CD14-positive monocyte (primary cell): ENCODE measurements at regions of chr15 and their contacts with region 1.

Region 1: DNA sequence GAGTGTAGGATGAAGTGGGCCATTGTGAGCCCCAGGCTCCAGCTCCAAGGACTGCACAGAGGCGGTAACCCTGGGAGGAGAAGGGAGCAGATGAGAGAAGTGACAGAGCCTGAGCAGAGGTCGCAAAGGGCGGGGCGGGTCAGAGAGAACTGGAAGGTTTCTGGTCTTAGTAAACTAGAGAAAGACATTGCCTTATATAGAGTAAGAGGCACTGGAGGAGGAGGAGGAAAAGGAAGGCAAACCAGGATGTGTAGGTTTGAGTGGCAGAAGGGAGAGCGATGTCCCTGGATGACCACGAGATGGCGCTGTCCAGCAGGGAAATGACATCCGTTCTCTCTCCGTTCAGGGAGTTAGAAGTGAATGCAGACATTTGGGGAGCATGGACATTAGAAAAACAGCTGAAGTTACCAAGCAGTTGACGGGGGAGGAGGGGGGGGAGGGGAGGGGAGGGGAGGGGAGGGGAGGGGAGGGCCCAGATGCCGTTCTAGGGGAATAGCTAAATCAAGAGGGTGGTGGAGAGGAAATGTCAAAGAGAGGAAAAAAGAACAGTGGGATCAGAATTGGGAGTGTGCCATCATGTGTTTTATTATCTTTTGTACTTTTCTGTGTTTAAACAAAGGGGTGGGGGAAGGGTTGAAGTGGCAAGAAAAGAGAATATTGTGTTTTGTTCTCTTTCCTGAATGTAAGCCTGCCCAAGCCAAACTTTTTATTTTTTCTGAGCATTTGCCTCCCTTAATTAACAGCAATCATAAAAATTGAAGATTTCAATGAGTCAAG is 48.8 kb downstream of the STARD5 start:
- DNase-seq: peak; percentile 76 to 82 (median 82)
- H3K4me3 ChIP-seq: no peak overlapping the region
- H3K4me3 Mint-ChIP-seq: no peak overlapping the region
- H3K27ac ChIP-seq: no peak overlapping the region
- H3K27ac Mint-ChIP-seq: peak overlapping the region in 1 of 7 donors; percentile 17
- H3K4me1 ChIP-seq: no peaks in the 10 kb centered on the region
- H3K4me1 Mint-ChIP-seq: peaks cover 6% of the 10 kb centered on the region
- H3K27me3 ChIP-seq: no peaks in the 10 kb centered on the region
- H3K27me3 Mint-ChIP-seq: no peaks in the 10 kb centered on the region
- CTCF ChIP-seq: peak; percentile 71

Region 2: DNA sequence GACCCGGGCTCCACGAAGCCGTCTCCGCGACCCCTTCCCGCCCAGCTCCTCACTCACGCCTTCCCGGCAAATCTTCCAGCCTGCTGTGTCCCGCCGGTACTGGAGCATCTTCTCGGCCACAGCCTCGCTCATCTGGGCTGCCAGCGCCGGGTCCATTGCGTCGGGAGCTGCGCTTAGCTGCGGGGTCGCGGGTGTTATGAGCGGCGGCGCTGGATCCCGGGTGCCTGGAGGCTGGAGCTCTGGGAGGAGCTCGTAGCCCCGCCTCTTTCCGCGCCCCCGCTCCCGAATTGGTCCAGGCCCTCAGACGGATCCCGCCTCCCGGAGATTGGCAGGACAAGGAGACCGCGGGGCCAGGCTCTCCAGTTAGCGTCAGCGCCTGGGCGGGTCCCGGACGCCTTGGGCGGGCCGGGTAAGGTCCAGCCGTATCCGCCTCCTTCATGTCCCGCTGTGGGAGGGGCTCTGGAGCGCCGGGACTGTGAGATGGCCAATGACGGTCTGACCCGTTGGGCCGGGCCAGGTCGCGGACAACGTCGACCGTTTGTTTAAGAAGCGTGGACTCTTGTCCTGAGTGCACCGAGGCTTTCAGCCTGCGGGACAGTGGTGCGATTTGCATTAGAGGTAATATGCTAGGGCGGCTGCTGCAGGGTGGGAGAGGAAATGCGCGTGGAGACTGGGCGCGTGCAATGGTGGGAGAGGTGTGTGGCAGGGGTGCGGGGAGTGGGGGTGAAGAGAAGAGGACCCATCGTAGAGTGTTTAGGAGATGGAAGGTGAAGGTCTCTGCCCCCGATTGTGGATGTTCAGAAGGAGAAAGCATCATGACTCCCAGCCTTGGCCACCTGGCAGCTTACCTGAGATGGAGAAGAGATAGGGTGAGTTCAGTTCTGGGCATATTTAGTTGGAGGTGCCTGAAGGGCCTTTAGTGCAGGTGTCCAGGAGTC is 49.1 kb after region 1 on chr15 and contains the start of gene STARD5:
- intact Hi-C with region 1: loop called in 1 of 2 experiments (anchors 5 kb)
- DNase-seq: peak; percentile 95 to 98 (median 98)
- H3K4me3 ChIP-seq: peak within 1 kb of the TSS; percentile 74 to 91 (median 83)
- H3K4me3 Mint-ChIP-seq: peak within 1 kb of the TSS; percentile 95 to 99
- H3K27ac ChIP-seq: peak within 1 kb of the TSS in 1 of 2 donors; percentile 79
- H3K27ac Mint-ChIP-seq: peak within 1 kb of the TSS; percentile 77 to 94 (median 91)
- H3K4me1 ChIP-seq: peaks cover 10 to 20% of the 10 kb centered on the region in 2 donors
- H3K4me1 Mint-ChIP-seq: peaks cover 20% of the 10 kb centered on the region
- H3K27me3 ChIP-seq: no peaks in the 10 kb centered on the region
- H3K27me3 Mint-ChIP-seq: peaks cover 1 to 4% (median 2%) of the 10 kb centered on the region in 3 donors
- CTCF ChIP-seq: no peak
- polyA plus RNA-seq, gene STARD5: 1.5 to 15.1 (median 2.5) TPM

Region 3: DNA sequence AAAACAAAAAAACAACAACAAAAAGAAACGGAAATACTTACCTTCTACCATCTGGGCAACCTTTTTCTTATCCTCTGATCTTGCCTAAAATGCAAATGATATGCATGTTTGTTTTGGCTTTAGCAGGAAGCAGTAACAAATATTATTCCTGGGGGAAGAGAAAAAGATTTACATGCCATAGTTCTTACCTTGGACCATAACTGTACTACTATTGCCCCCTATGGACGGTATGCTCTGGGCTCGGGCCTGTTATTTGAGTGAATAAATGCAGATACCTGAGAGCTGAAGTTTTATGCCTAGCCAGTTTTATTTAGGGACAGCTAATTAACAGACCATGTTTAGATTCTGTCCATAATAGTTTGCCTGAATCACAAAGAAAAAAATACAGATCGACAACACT is 61.4 kb after region 1 on chr15:
- intact Hi-C with region 1: loop called (anchors 5 kb)
- DNase-seq: peak in 2 of 3 donors; percentile 30 to 36
- H3K4me3 ChIP-seq: no peak overlapping the region
- H3K4me3 Mint-ChIP-seq: no peak overlapping the region
- H3K27ac ChIP-seq: no peak overlapping the region
- H3K27ac Mint-ChIP-seq: no peak overlapping the region
- H3K4me1 ChIP-seq: peaks cover 10 to 16% of the 10 kb centered on the region in 2 donors
- H3K4me1 Mint-ChIP-seq: peaks cover 12% of the 10 kb centered on the region
- H3K27me3 ChIP-seq: no peaks in the 10 kb centered on the region
- H3K27me3 Mint-ChIP-seq: peaks cover 0 to 5% (median 2%) of the 10 kb centered on the region in 3 donors
- CTCF ChIP-seq: peak; percentile 35

Region 4: DNA sequence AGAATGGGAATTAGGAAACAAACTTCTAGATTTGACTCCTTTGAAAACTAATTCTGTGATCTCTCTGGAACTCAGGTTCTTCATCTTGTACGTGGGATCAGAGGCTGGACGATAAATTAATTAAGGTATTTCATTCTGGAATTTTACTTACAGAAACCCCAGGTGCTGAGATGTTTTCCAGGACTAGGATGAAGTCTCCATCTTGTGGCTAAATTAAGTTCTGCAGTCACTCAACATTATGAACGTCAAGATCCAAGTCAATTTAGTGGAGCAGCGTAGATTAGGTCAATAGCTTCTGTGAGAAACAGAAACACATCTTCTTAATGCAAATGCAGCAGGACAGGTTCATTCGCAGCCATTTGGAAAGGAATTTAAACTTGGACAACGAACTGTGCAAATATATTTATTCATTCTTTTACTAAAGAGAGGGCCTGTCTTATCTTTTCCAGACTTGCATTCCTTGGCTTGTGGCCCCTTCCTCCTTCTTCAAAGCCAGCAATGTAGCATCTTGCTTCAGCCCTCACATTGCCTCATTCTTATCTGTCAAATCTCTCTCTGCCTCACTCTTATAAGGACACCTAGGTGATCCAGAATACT is 125.6 kb after region 1 on chr15:
- intact Hi-C with region 1: loop called (anchors 2 kb)
- DNase-seq: peak; percentile 9 to 33 (median 32)
- H3K4me3 ChIP-seq: no peak overlapping the region
- H3K4me3 Mint-ChIP-seq: no peak overlapping the region
- H3K27ac ChIP-seq: no peak overlapping the region
- H3K27ac Mint-ChIP-seq: no peak overlapping the region
- H3K4me1 ChIP-seq: no peaks in the 10 kb centered on the region
- H3K4me1 Mint-ChIP-seq: peaks cover 2% of the 10 kb centered on the region
- H3K27me3 ChIP-seq: no peaks in the 10 kb centered on the region
- H3K27me3 Mint-ChIP-seq: peaks cover 0 to 1% (median 0%) of the 10 kb centered on the region in 3 donors
- CTCF ChIP-seq: peak; percentile 82

Region 5: DNA sequence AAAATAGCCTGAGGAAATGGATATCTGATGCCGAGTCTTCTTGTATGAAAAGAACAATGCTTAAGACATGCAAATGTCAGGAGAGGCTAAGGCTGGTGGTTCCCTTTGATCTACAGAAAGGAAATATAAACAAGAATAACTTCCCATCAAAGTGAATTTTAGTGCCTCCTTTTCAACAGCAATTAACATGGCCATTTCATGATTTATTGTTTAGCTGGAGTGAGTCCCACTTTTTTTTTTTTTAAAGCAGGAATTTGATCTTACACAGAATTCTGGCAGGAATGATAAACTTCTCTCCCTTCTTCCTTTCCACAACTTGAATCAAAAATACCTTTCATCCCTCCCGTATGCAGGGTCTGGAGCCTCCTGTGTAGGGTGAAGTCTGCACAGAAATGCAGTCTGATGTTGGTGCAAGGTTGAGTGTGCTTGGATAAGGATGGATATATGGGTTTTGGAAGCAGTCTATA is 483.7 kb after region 1 on chr15:
- intact Hi-C with region 1: no loop called
- DNase-seq: no peak
- H3K4me3 ChIP-seq: no peak overlapping the region
- H3K4me3 Mint-ChIP-seq: no peak overlapping the region
- H3K27ac ChIP-seq: no peak overlapping the region
- H3K27ac Mint-ChIP-seq: no peak overlapping the region
- H3K4me1 ChIP-seq: no peaks in the 10 kb centered on the region
- H3K4me1 Mint-ChIP-seq: no peaks in the 10 kb centered on the region
- H3K27me3 ChIP-seq: no peaks in the 10 kb centered on the region
- H3K27me3 Mint-ChIP-seq: no peaks in the 10 kb centered on the region
- CTCF ChIP-seq: no peak